ENCODE measurements at regions of chr19 and their contacts with region 1.

Region 1: DNA sequence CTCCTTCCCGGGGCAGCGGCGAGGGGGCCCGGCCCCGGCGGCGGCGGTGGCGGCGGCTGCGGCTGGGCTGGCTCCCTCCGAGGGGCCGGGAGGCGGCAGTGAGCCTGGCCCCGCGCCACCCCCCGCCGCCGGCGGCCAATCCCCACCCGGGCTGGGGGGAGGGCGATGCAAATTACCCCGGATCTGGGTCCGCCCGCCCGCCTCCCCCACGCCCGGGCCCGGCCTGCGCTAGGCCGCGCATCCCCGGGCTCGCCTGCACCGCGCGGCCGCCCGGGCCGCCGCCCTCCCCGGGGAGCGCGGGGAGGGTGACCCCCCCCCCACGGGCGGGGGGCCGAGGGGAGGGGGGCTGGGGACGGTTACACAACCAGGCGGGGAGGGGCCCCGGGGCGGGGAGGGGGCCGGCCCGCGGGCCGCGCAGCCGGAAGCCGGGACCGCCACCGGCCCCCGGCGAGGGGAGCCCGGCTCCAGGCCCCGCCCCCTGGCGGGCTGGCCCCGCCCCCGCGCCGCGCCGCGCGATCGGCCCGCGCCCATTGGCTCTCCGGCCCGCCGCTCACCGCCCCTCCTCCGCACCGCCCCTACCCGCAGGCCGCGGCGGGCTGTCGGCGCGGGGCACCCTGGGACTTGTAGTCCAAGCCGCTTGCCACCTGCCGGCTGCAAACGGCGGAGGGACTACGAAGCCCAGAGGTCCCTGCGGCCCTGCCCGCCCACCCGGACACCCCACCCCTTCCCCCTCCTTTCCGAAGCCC is 1.1 kb downstream of the ZBTB7A start:
- DNase-seq: peak; percentile 98
- H3K4me3 ChIP-seq: peak overlapping the region; percentile 68 to 99 (median 96)
- H3K27ac ChIP-seq: peak overlapping the region in 7 of 8 donors; percentile 98 to 99 (median 99)
- H3K4me1 ChIP-seq: peaks cover 45 to 75% (median 65%) of the 10 kb centered on the region in 6 donors
- H3K27me3 ChIP-seq: no peaks in the 10 kb centered on the region
- CTCF ChIP-seq: peak in 2 of 11 experiments; percentile 31 to 40
- POLR2A ChIP-seq: peak in 1 of 3 donors; percentile 49

Region 2: GRCh38 chr19:3821857-3822364 is 243.7 kb before region 1 on chr19:
- intact Hi-C with region 1: no loop called
- DNase-seq: peak; percentile 96
- H3K4me3 ChIP-seq: peak overlapping the region in 1 of 8 donors; percentile 40
- H3K27ac ChIP-seq: no peak overlapping the region
- H3K4me1 ChIP-seq: peaks cover 0 to 35% (median 17%) of the 10 kb centered on the region in 6 donors
- H3K27me3 ChIP-seq: peaks cover 0 to 12% (median 0%) of the 10 kb centered on the region in 7 donors
- CTCF ChIP-seq: peak; percentile 98 to 100 (median 100)
- POLR2A ChIP-seq: no peak

Region 3: DNA sequence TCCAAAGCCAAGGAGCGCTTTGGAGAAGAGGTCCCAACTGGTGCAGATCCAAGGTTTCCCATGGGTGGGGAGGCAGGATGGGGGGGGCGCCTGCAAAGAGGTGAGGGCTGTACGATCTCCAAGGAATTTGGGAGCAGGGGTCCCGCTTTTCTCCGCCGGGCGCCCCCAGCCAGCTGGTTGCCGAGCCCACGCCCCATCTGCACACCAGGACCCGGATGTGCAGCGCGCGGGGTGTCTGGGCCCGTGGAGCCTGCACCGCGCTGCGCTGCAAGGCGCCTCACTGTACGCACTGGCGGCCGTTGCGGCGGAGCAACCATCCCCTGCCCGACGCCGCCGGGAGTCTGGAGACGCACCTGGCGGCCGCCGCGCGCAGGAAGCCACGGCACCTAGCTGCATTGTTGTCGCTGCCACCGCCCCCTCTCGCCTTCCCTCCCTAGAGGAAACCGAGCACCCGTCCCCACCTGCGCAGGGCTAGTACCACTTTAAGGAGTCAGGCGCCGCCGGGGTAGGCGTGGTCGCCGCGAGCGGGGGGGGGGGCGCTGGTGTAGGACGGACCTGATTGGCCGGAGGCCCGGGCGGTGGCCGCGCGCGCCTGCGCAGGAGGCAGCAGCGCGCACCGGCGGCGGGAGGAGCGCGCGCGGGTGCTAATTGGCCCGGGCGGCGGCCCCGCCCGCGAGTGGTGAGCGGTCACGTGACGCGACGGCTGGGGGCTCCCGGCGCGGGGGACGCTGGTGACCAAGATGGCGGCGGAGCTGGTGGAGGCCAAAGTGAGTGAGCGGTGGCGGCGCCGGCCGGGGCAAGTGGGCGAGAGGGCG is 58.4 kb before region 1 on chr19 and contains the start of gene PIAS4:
- intact Hi-C with region 1: loop called (anchors 10 kb)
- DNase-seq: peak; percentile 99
- H3K4me3 ChIP-seq: peak within 1 kb of the TSS; percentile 58 to 100 (median 96)
- H3K27ac ChIP-seq: peak within 1 kb of the TSS; percentile 70 to 93 (median 88)
- H3K4me1 ChIP-seq: peaks cover 21 to 57% (median 46%) of the 10 kb centered on the region in 6 donors
- H3K27me3 ChIP-seq: no peaks in the 10 kb centered on the region
- CTCF ChIP-seq: peak in 5 of 11 experiments; percentile 10 to 42 (median 34)
- POLR2A ChIP-seq: peak in 1 of 3 donors; percentile 58
- total RNA-seq, gene PIAS4: 16.4 to 30.5 (median 29.0) TPM

Region 4: GRCh38 chr19:4115050-4115817 is 49.6 kb after region 1 on chr19:
- intact Hi-C with region 1: loop called (anchors 10 kb)
- DNase-seq: peak; percentile 92
- H3K4me3 ChIP-seq: peak overlapping the region in 3 of 8 donors; percentile 8 to 43 (median 8)
- H3K27ac ChIP-seq: peak overlapping the region; percentile 53 to 90 (median 80)
- H3K4me1 ChIP-seq: peaks cover 10 to 90% (median 30%) of the 10 kb centered on the region in 6 donors
- H3K27me3 ChIP-seq: no peaks in the 10 kb centered on the region
- CTCF ChIP-seq: peak in 2 of 11 experiments; percentile 21 to 22
- POLR2A ChIP-seq: no peak

Measured in spleen (tissue), 13 donors.